Activated CD8-positive, alpha-beta T cell treated with anti-CD3 and anti-CD28 coated beads, Interleukin-2, amount 10 ng/mL, durations not matched to agents 7 days and 5 days (primary cell): ENCODE measurements at regions of chr19 and their contacts with region 1.

Region 1: DNA sequence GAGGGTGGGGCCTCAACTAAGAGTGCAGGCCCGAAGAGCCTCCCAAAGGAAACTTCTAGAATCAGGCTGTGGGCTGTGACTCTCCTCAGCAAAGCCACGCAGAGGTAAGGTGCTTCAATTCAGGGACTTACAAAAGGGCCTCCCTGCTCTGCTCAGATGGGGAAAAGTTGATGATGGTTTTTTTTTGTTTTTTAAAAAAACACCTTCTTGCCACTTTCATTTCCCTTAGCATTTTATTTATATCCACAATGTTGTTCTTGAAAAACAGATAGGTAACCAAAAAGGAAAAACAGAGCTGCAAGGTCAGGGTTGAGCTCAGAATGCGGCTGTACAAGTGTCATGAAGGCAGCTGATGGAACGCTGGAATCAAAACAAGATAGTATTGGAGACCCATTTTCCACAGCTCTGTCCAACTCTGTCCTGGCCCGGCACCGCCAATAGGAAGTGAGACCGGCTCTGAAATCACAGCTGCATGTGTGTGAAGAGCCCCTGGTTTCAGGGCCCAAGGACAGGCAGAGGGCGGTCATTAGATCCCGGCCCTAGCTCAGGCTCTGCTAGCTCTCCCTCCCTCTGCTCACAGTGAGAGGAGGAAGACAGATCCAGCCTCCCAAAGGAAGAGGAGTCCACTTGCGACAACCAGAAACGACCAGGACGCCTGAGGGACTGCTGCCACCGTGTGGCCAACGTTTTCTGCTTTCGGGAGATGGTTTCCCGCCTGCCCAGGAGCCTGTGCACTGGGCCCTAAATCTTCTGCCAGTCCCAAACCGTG is 58.3 kb downstream of the KLF2 start:
- DNase-seq: peak; percentile 86
- ATAC-seq: peak; percentile 78
- H3K4me3 Mint-ChIP-seq: peak overlapping the region; percentile 31
- H3K27ac Mint-ChIP-seq: peak overlapping the region; percentile 79
- H3K4me1 Mint-ChIP-seq: peaks cover 49% of the 10 kb centered on the region
- H3K27me3 Mint-ChIP-seq: no peaks in the 10 kb centered on the region

Region 2: GRCh38 chr19:15897738-15898276 is 485.2 kb before region 1 on chr19 and contains the start of gene CYP4F2:
- CTCF ChIA-PET with region 1: no interaction called
- POLR2A ChIA-PET with region 1: no interaction called
- DNase-seq: no peak
- ATAC-seq: no peak
- H3K4me3 Mint-ChIP-seq: no peak within 1 kb of the TSS
- H3K27ac Mint-ChIP-seq: no peak within 1 kb of the TSS
- H3K4me1 Mint-ChIP-seq: peaks cover 9% of the 10 kb centered on the region
- H3K27me3 Mint-ChIP-seq: peaks cover 20% of the 10 kb centered on the region
- total RNA-seq, gene CYP4F2: not detected

Region 3: DNA sequence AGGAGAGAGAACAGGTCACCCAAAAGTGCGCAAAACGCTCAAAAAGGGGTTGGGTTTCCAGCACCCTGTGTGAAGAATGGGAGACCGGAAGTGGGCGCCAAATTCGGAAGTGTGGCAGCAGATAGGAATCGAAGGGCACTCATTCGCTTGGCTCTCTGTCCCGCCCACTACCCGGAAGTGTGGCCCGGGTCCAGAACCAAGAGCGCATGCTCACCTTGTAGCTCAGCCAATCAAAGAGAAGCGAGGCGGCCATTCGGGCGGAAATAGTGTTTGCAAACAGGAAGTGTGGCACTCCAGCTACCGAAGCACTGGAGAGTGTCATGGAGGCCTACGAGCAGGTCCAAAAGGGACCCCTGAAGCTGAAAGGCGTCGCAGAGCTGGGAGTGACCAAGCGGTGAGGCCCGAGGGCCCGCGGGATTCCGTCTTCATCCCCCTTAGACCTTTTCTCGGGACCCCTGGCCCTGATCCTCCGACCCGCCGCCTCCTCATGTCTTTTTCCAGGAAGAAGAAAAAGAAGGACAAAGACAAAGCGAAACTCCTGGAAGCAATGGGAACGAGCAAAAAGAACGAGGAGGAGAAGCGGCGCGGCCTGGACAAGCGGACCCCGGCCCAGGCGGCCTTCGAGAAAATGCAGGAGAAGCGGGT is 197.7 kb before region 1 on chr19 and contains the start of gene FAM32A:
- CTCF ChIA-PET with region 1: interaction called, 25 read pairs
- POLR2A ChIA-PET with region 1: no interaction called
- DNase-seq: peak; percentile 100
- ATAC-seq: peak; percentile 95
- H3K4me3 Mint-ChIP-seq: peak within 1 kb of the TSS; percentile 98
- H3K27ac Mint-ChIP-seq: peak within 1 kb of the TSS; percentile 97
- H3K4me1 Mint-ChIP-seq: peaks cover 39% of the 10 kb centered on the region
- H3K27me3 Mint-ChIP-seq: peaks cover 6% of the 10 kb centered on the region
- total RNA-seq, gene FAM32A: 65.8 to 69.4 TPM

Region 4: GRCh38 chr19:16247353-16248182 is 135.4 kb before region 1 on chr19:
- CTCF ChIA-PET with region 1: interaction called, 120 read pairs
- POLR2A ChIA-PET with region 1: interaction called, 4 read pairs
- DNase-seq: peak; percentile 87
- ATAC-seq: peak; percentile 96
- H3K4me3 Mint-ChIP-seq: no peak overlapping the region
- H3K27ac Mint-ChIP-seq: peak overlapping the region; percentile 26
- H3K4me1 Mint-ChIP-seq: peaks cover 21% of the 10 kb centered on the region
- H3K27me3 Mint-ChIP-seq: peaks cover 15% of the 10 kb centered on the region

Region 5: GRCh38 chr19:16268676-16269319 is 114.2 kb before region 1 on chr19:
- CTCF ChIA-PET with region 1: interaction called, 13 read pairs
- POLR2A ChIA-PET with region 1: no interaction called
- DNase-seq: peak; percentile 31
- ATAC-seq: no peak
- H3K4me3 Mint-ChIP-seq: no peak overlapping the region
- H3K27ac Mint-ChIP-seq: no peak overlapping the region
- H3K4me1 Mint-ChIP-seq: peaks cover 49% of the 10 kb centered on the region
- H3K27me3 Mint-ChIP-seq: peaks cover 33% of the 10 kb centered on the region

Region 6: DNA sequence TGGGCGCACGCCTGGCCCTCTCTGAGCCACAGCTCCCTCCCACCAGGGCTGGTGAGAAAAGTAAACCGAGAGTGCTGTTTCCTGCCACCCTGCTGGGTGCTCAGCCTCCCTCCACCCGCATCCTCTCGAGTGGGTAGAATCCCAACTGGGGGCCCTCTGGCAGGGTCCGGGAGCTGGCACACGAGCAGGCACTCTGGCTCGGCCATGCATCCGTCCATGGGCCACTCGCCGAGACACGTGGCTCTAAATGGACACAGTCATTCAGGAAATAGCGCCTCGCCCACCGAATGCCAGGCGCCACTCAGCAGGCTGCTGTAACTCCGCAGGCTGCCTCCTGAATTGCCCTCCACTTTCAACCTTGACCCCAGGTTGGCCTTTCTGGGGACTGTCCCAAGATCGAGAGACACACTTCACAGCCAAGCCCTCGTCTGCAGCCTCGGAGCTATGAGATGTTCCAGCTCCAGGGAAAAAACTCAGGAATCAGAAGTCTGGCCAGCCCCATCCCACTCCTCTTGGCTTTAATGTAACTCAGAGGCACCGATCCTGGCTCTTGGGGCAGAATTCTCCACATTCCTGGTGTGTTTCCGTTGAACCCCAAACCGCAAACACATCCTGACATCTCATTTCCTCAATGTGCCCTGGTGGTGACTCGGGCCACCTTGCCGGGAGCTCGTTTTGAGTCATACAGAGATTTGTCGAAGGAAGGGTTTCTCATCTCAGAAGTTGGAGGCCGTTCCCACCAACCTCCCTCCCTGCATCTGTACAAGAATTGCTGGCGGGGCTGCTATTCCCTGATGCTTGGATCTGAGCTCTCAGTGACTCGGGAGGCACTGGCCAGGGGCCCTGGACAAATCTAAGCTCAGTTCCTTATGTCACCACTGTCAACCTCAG is 44.2 kb before region 1 on chr19:
- CTCF ChIA-PET with region 1: interaction called, 20 read pairs
- POLR2A ChIA-PET with region 1: interaction called, 556 read pairs
- DNase-seq: peak; percentile 76
- ATAC-seq: peak; percentile 70
- H3K4me3 Mint-ChIP-seq: peak overlapping the region; percentile 65
- H3K27ac Mint-ChIP-seq: peak overlapping the region; percentile 90
- H3K4me1 Mint-ChIP-seq: peaks cover 69% of the 10 kb centered on the region
- H3K27me3 Mint-ChIP-seq: peaks cover 14% of the 10 kb centered on the region